ENCODE measurements at regions of chr12 and their contacts with region 1.

Region 1: DNA sequence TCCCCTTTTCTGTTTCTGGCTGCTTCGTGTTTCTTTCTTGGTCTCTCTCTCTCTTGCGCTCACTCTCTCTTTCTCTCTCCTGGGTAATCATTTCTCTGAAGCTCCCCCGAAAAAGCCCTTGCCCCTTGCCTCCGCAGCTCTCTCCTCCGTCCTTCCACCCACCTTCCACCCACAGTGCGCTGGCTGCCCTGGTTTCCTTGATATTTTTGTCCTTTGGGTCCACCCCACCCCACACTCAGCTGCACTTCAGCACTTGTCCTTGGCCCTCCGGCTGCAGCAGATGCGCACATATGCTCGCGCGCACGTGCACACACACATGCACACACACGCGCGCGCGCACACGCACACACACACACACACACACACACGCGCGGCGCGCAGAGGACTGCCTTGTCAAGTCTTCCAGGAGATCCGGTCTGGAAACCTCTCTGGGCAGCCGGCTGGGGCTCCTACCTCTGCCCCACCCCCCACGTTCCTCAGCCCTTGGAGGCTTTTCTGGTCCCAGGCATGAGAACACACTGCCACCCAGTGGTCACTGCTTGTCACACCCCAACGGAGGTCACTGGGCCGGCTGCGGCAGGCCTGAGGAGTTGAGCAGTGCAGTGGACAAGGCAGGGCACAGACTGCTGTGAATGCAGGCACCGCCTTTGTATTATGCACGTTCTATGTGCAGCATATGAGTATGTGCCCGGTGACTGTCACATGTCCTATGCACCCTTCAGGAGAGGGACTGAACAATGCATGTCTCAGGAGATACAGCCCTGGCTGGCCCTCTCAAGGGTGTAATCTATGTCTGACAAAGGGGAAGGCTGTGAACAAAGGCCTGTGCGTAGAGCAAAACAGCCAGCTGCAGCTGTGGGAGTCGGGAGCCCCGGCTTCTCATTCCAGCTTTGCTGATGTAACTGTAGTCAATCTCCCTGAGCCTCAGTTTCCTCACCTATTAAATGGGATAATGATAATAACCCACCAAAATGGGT is 6.5 kb downstream of the LAG3 start:
- DNase-seq: peak; percentile 96
- ATAC-seq: peak; percentile 54
- H3K4me3 Mint-ChIP-seq: peak overlapping the region; percentile 89
- H3K27ac Mint-ChIP-seq: peak overlapping the region; percentile 89
- H3K4me1 Mint-ChIP-seq: peaks cover 83% of the 10 kb centered on the region
- H3K27me3 Mint-ChIP-seq: no peaks in the 10 kb centered on the region
- CTCF ChIP-seq: peak; percentile 89

Region 2: GRCh38 chr12:6764011-6764828 is 14.6 kb before region 1 on chr12:
- CTCF ChIA-PET with region 1: interaction called, 89 read pairs
- POLR2A ChIA-PET with region 1: interaction called, 21 read pairs
- intact Hi-C with region 1: no loop called
- DNase-seq: peak; percentile 71
- ATAC-seq: peak; percentile 84
- H3K4me3 Mint-ChIP-seq: peak overlapping the region; percentile 42
- H3K27ac Mint-ChIP-seq: no peak overlapping the region
- H3K4me1 Mint-ChIP-seq: peaks cover 29% of the 10 kb centered on the region
- H3K27me3 Mint-ChIP-seq: peaks cover 32% of the 10 kb centered on the region
- CTCF ChIP-seq: no peak

Region 3: GRCh38 chr12:6792522-6793201 is 13.8 kb after region 1 on chr12:
- CTCF ChIA-PET with region 1: interaction called, 14 read pairs
- POLR2A ChIA-PET with region 1: interaction called, 3 read pairs
- intact Hi-C with region 1: no loop called
- DNase-seq: peak; percentile 62
- ATAC-seq: peak; percentile 81
- H3K4me3 Mint-ChIP-seq: peak overlapping the region; percentile 33
- H3K27ac Mint-ChIP-seq: peak overlapping the region; percentile 14
- H3K4me1 Mint-ChIP-seq: peaks cover 49% of the 10 kb centered on the region
- H3K27me3 Mint-ChIP-seq: peaks cover 14% of the 10 kb centered on the region
- CTCF ChIP-seq: no peak

Region 4: GRCh38 chr12:7005311-7005710 is 226.4 kb after region 1 on chr12:
- CTCF ChIA-PET with region 1: no interaction called
- POLR2A ChIA-PET with region 1: no interaction called
- intact Hi-C with region 1: no loop called
- DNase-seq: no peak
- ATAC-seq: no peak
- H3K4me3 Mint-ChIP-seq: no peak overlapping the region
- H3K27ac Mint-ChIP-seq: no peak overlapping the region
- H3K4me1 Mint-ChIP-seq: peaks cover 14% of the 10 kb centered on the region
- H3K27me3 Mint-ChIP-seq: no peaks in the 10 kb centered on the region
- CTCF ChIP-seq: no peak

Region 5: GRCh38 chr12:7374423-7375144 is 595.7 kb after region 1 on chr12:
- CTCF ChIA-PET with region 1: no interaction called
- POLR2A ChIA-PET with region 1: no interaction called
- intact Hi-C with region 1: no loop called
- DNase-seq: peak; percentile 52
- ATAC-seq: peak; percentile 51
- H3K4me3 Mint-ChIP-seq: no peak overlapping the region
- H3K27ac Mint-ChIP-seq: no peak overlapping the region
- H3K4me1 Mint-ChIP-seq: no peaks in the 10 kb centered on the region
- H3K27me3 Mint-ChIP-seq: peaks cover 19% of the 10 kb centered on the region
- CTCF ChIP-seq: peak; percentile 29

Measured in activated CD8-positive, alpha-beta T cell treated with anti-CD3 and anti-CD28 coated beads for 36 hours (primary cell).